HepG2 (cell line): ENCODE measurements at regions of chr3 and their contacts with region 1.

Region 1: GRCh38 chr3:44529927-44530326 is 25.1 kb upstream of the ZKSCAN7 start:
- DNase-seq: no peak
- ATAC-seq: peak; percentile 60
- H3K4me3 ChIP-seq: no peak overlapping the region
- H3K27ac ChIP-seq: no peak overlapping the region
- H3K4me1 ChIP-seq: no peaks in the 10 kb centered on the region
- H3K27me3 ChIP-seq: peaks cover 0 to 10% of the 10 kb centered on the region in 2 experiments; a peak in 2 of 5 replicates
- CTCF ChIP-seq: peak; percentile 31; the same call in 1 of the 2 replicates
- EP300 ChIP-seq: no peak
- POLR2A ChIP-seq: no peak
- RAD21 ChIP-seq: no peak

Region 2: DNA sequence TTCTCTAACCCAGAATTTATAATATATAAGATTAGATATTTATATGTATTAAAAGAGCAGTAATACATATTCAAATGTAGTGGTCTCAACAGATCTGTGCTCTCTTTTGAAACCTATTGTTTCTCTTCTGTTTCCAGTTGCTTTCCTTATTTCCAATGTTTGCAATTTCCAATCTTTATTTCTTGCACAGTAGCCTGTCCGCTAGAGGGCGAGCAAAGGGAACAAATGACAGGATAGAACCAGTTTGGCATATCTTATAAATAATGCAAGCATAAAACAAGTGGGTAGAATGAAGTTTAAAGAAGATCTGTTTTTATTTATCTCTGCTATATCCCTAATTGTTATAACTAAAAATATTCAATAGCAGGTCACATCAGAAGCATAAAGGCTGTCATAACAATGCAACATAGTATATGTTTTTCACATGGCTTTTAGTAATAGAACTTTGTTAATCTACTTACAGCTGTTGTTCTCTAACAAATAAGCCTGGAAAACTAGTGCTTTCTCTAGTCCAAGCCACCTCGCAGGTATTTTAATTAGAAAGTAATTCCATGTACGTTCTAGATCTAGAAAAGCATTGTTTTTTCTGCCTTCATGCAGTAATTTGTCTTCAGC is 206.5 kb before region 1 on chr3:
- CTCF ChIA-PET with region 1: no interaction called
- POLR2A ChIA-PET with region 1: no interaction called
- in situ Hi-C with region 1: no loop called
- intact Hi-C with region 1: loop called (anchors 5 kb)
- DNase-seq: peak; percentile 55
- ATAC-seq: no peak
- H3K4me3 ChIP-seq: no peak overlapping the region
- H3K27ac ChIP-seq: no peak overlapping the region
- H3K4me1 ChIP-seq: peaks cover 22% of the 10 kb centered on the region
- H3K27me3 ChIP-seq: no peaks in the 10 kb centered on the region; a peak in 1 of 5 replicates
- CTCF ChIP-seq: peak; percentile 83
- EP300 ChIP-seq: no peak
- POLR2A ChIP-seq: no peak
- RAD21 ChIP-seq: peak; percentile 71; the same call in 1 of the 2 replicates

Region 3: GRCh38 chr3:44761424-44762169 is 231.7 kb after region 1 on chr3 and contains the starts of genes KIAA1143 and KIF15:
- CTCF ChIA-PET with region 1: no interaction called
- POLR2A ChIA-PET with region 1: no interaction called
- in situ Hi-C with region 1: no loop called
- intact Hi-C with region 1: loop called (anchors 10 kb)
- DNase-seq: peak; percentile 89
- ATAC-seq: peak; percentile 90
- H3K4me3 ChIP-seq: peak within 1 kb of the TSS; percentile 61 to 94 (median 88)
- H3K27ac ChIP-seq: peak within 1 kb of the TSS; percentile 79
- H3K4me1 ChIP-seq: peaks cover 40% of the 10 kb centered on the region
- H3K27me3 ChIP-seq: no peaks in the 10 kb centered on the region; a peak in 2 of 5 replicates
- CTCF ChIP-seq: peak; percentile 43; the same call in 1 of the 2 replicates
- EP300 ChIP-seq: peak; percentile 8 to 37; a peak in 2 of 4 replicates
- POLR2A ChIP-seq: peak; percentile 73 to 86; a peak in 3 of 4 replicates
- RAD21 ChIP-seq: 0 out of 2 replicates have a peak, but pooled peaks have one; percentile 22
- total RNA-seq, gene KIAA1143: 27.2 and 49.0 TPM in 2 replicates
- total RNA-seq, gene KIF15: 33.8 and 55.1 TPM in 2 replicates

Region 4: GRCh38 chr3:44913868-44914468 is 384.0 kb after region 1 on chr3:
- CTCF ChIA-PET with region 1: interaction called, 20 read pairs
- POLR2A ChIA-PET with region 1: no interaction called
- in situ Hi-C with region 1: loop called (anchors 5 kb)
- intact Hi-C with region 1: loop called (anchors 1 kb)
- DNase-seq: peak; percentile 60
- ATAC-seq: peak; percentile 88
- H3K4me3 ChIP-seq: no peak overlapping the region
- H3K27ac ChIP-seq: no peak overlapping the region
- H3K4me1 ChIP-seq: no peaks in the 10 kb centered on the region
- H3K27me3 ChIP-seq: no peaks in the 10 kb centered on the region
- CTCF ChIP-seq: peak; percentile 92
- EP300 ChIP-seq: no peak
- POLR2A ChIP-seq: no peak
- RAD21 ChIP-seq: peak; percentile 79

Region 5: DNA sequence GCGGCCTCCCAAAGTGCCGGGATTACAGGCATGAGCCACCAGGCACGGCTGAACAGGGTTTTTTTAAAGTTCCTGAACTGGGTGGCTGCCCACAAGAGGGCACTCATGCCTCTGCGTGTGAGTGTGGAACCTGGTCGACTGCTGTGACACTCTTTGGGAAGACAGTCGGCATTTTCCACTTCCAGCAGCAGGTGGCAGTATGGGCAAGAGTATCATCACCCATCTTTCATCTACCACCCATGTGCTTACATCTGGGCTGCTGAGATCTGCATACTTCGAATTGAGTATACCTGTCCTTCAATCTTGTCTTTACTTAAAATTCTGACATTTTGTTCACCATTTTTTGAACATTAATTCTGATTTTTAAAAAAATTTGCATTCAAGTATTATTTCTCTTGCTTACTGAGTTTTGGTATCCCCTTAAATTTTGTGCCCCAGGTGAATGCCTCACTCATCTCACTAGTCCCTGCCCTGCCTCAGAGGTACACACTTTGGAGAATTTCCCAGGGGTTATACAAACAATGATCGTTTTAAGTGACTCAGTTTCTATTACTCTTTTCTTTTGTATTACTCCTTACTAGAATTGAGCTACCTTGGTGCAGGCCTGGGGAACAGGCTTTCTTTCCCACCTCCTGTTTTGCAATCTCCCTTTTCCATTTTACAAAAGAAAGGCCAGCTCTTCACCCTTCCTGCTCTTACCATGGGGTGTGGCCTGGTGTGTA is 508.0 kb after region 1 on chr3:
- CTCF ChIA-PET with region 1: no interaction called
- POLR2A ChIA-PET with region 1: no interaction called
- in situ Hi-C with region 1: no loop called
- intact Hi-C with region 1: loop called (anchors 5 kb)
- DNase-seq: peak; percentile 91
- ATAC-seq: peak; percentile 96
- H3K4me3 ChIP-seq: no peak overlapping the region
- H3K27ac ChIP-seq: no peak overlapping the region
- H3K4me1 ChIP-seq: no peaks in the 10 kb centered on the region
- H3K27me3 ChIP-seq: peaks cover 0 to 24% of the 10 kb centered on the region in 2 experiments; a peak in 3 of 5 replicates
- CTCF ChIP-seq: peak; percentile 96
- EP300 ChIP-seq: no peak
- POLR2A ChIP-seq: no peak
- RAD21 ChIP-seq: peak; percentile 87